HCT116 (cell line): ENCODE measurements at regions of chr9 and their contacts with region 1.

Region 1: DNA sequence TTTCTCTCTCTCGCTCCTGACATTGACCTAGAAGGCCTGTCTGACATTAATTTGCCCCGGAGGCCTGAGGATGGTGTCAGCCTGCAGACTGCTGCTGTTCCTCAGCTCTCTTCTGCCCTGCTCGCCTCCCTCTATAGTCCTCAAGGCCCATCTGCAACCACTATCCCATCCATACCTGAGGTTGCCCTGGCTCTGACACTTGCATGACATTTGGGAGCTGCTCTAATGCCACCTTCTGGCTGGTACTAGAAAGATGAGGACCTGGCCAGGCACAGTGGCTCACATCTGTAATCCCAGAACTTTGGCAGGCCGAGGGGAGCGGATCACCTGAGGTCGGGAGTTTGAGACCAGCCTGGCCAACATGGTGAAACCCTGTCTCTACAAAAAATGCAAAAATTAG is 38.6 kb upstream of the GGTA1 start:
- DNase-seq: peak; percentile 48
- ATAC-seq: peak; percentile 97
- H3K4me3 ChIP-seq: no peak overlapping the region
- H3K27ac ChIP-seq: no peak overlapping the region
- H3K4me1 ChIP-seq: no peaks in the 10 kb centered on the region; a peak in 1 of 4 replicates
- H3K27me3 ChIP-seq: no peaks in the 10 kb centered on the region
- CTCF ChIP-seq: peak; percentile 37 to 73 (median 47); a peak in 5 of 6 replicates
- POLR2A ChIP-seq: no peak
- RAD21 ChIP-seq: peak; percentile 84

Region 2: DNA sequence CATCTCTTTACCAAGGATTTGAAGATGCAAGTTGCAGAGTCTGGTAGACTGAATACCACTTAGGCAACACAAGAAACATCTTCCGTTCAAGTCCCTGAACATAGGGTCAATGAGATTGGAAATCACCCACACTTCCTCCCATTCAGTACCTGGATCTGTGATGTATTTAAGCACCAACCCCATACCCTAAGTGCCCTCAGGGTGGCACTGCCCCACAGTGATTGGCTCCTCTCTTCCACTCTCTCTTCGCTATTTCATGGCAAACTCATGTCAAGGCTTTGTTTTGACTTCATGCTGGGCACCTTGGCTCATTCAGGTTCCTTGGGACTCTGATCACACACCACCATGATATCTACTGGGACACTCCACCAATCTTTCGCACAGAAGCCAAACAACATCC is 92.3 kb before region 1 on chr9:
- CTCF ChIA-PET with region 1: interaction called, 3 read pairs
- POLR2A ChIA-PET with region 1: no interaction called
- RAD21 ChIA-PET with region 1: no interaction called
- intact Hi-C with region 1: loop called (anchors 1 kb)
- DNase-seq: peak; percentile 8
- ATAC-seq: peak; percentile 82
- H3K4me3 ChIP-seq: no peak overlapping the region
- H3K27ac ChIP-seq: no peak overlapping the region
- H3K4me1 ChIP-seq: no peaks in the 10 kb centered on the region
- H3K27me3 ChIP-seq: no peaks in the 10 kb centered on the region
- CTCF ChIP-seq: peak; percentile 44 to 58 (median 49); a peak in 5 of 6 replicates
- POLR2A ChIP-seq: no peak
- RAD21 ChIP-seq: peak; percentile 75

Region 3: DNA sequence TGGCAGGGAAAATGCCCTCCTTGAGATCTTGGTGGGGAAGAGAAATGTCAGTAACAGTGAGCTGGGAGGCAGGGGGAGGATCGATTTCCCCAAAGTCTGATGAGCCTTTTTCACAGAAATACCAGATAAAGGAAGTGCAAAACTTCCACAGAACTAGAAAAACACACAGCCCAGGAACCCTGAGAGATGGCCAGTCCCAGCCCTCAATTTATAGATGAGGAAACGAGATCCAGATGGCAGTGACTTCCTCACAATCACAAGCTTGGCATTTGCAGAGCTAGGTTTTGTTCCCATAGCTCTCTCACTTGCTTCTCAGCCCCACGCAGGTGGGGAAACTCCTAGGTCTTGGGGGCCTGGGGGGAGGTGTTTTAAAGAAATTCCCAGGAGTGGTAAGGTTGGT is 34.8 kb before region 1 on chr9:
- CTCF ChIA-PET with region 1: interaction called, 3 read pairs
- POLR2A ChIA-PET with region 1: no interaction called
- RAD21 ChIA-PET with region 1: interaction called in 1 of 2 experiments, 10 read pairs
- intact Hi-C with region 1: no loop called
- DNase-seq: no peak
- ATAC-seq: no peak
- H3K4me3 ChIP-seq: no peak overlapping the region
- H3K27ac ChIP-seq: no peak overlapping the region
- H3K4me1 ChIP-seq: peaks cover 7 to 20% of the 10 kb centered on the region in 2 experiments; a peak in 3 of 4 replicates
- H3K27me3 ChIP-seq: no peaks in the 10 kb centered on the region; the same call in 1 of the 2 replicates
- CTCF ChIP-seq: no peak
- POLR2A ChIP-seq: no peak
- RAD21 ChIP-seq: no peak